CD4-positive, alpha-beta T cell (primary cell): ENCODE measurements at regions of chr6 and their contacts with region 1.

Region 1: DNA sequence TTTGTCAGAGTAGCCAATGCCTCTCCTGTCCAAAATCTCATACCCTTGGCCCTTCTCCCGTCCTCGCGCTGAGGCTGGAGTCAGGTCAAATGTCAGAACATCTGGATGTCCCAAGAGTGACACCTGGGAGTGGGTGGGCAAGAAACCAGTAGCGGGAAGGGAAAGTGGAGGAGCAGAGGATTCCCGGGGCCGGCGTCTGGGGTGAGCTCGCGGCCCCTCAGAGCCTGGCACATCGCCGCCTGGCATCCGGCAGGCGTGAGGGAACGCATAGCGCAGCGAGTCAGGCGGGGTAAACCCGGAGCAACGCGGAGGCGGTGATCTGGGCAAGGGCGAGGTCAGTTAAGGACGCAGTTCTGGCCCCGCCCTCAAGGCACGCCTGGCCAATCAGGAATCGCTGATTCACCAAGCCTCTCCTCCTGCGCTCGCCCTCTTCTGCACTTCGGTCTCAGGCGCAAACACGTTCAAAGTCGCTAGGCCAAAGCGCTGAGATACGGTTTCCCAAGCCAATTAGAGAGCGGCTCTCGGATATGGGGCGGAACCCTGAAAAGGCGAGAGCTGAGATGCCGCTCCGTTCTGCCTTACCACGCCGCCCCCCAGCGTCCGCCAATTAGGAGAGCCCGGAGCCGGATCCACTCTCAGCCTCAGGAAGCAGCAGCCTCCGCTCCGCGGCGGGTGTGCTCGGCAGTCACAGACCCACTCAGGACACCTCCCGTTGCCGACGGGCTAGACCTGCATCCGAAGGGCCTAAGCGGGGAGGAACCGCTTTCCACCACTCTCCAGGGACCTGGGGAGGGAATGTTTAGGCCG is 22.5 kb downstream of the VPS52 start:
- DNase-seq: peak; percentile 89 to 99 (median 94)
- ATAC-seq: peak; percentile 83
- H3K4me3 ChIP-seq: peak overlapping the region; percentile 70
- H3K4me3 Mint-ChIP-seq: peak overlapping the region; percentile 92
- H3K27ac ChIP-seq: peak overlapping the region; percentile 98
- H3K27ac Mint-ChIP-seq: peak overlapping the region; percentile 97
- H3K4me1 ChIP-seq: peaks cover 32% of the 10 kb centered on the region
- H3K4me1 Mint-ChIP-seq: peaks cover 37% of the 10 kb centered on the region
- H3K27me3 ChIP-seq: no peaks in the 10 kb centered on the region
- H3K27me3 Mint-ChIP-seq: no peaks in the 10 kb centered on the region
- CTCF ChIP-seq: peak; percentile 32

Region 2: GRCh38 chr6:31525932-31526591 is 1723.1 kb before region 1 on chr6:
- CTCF ChIA-PET with region 1: no interaction called
- POLR2A ChIA-PET with region 1: no interaction called
- intact Hi-C with region 1: no loop called
- DNase-seq: no peak
- ATAC-seq: no peak
- H3K4me3 ChIP-seq: no peak overlapping the region
- H3K4me3 Mint-ChIP-seq: no peak overlapping the region
- H3K27ac ChIP-seq: no peak overlapping the region
- H3K27ac Mint-ChIP-seq: no peak overlapping the region
- H3K4me1 ChIP-seq: no peaks in the 10 kb centered on the region
- H3K4me1 Mint-ChIP-seq: no peaks in the 10 kb centered on the region
- H3K27me3 ChIP-seq: no peaks in the 10 kb centered on the region
- H3K27me3 Mint-ChIP-seq: no peaks in the 10 kb centered on the region
- CTCF ChIP-seq: no peak

Region 3: GRCh38 chr6:32885698-32886286 is 363.3 kb before region 1 on chr6:
- CTCF ChIA-PET with region 1: no interaction called
- POLR2A ChIA-PET with region 1: no interaction called
- intact Hi-C with region 1: loop called in 1 of 2 experiments (anchors 1 kb)
- DNase-seq: peak in 3 of 14 experiments; percentile 83 to 85 (median 83)
- ATAC-seq: peak; percentile 65
- H3K4me3 ChIP-seq: no peak overlapping the region
- H3K4me3 Mint-ChIP-seq: no peak overlapping the region
- H3K27ac ChIP-seq: no peak overlapping the region
- H3K27ac Mint-ChIP-seq: no peak overlapping the region
- H3K4me1 ChIP-seq: no peaks in the 10 kb centered on the region
- H3K4me1 Mint-ChIP-seq: no peaks in the 10 kb centered on the region
- H3K27me3 ChIP-seq: no peaks in the 10 kb centered on the region
- H3K27me3 Mint-ChIP-seq: no peaks in the 10 kb centered on the region
- CTCF ChIP-seq: peak; percentile 73

Region 4: DNA sequence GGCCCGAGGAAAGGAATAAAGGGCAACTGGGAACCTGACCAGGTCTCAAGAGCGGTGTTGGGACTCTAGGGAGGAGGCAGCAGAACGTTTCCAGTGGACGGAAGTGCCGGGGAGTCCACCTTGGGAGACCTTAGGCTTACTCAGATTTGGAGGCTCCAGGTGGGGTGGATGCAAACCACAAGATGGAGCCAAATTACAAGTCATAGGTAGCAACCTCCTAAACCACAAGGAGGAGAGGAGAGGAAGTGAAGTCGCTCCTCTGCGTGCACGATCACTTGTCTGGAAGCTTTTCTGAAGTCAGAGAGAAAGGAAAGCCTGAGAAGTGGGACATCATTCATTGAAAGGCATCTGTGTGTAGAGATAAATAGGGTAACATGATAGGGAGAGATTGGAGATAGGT is 249.1 kb before region 1 on chr6:
- CTCF ChIA-PET with region 1: no interaction called
- POLR2A ChIA-PET with region 1: no interaction called
- intact Hi-C with region 1: no loop called
- DNase-seq: peak in 5 of 14 experiments; percentile 25 to 64 (median 35)
- ATAC-seq: peak; percentile 83
- H3K4me3 ChIP-seq: no peak overlapping the region
- H3K4me3 Mint-ChIP-seq: no peak overlapping the region
- H3K27ac ChIP-seq: no peak overlapping the region
- H3K27ac Mint-ChIP-seq: no peak overlapping the region
- H3K4me1 ChIP-seq: peaks cover 4% of the 10 kb centered on the region
- H3K4me1 Mint-ChIP-seq: peaks cover 7% of the 10 kb centered on the region
- H3K27me3 ChIP-seq: peaks cover 4 to 6% of the 10 kb centered on the region in 2 experiments
- H3K27me3 Mint-ChIP-seq: peaks cover 22% of the 10 kb centered on the region
- CTCF ChIP-seq: peak; percentile 45

Region 5: GRCh38 chr6:33161354-33162331 is 87.5 kb before region 1 on chr6:
- CTCF ChIA-PET with region 1: interaction called, 76 read pairs
- POLR2A ChIA-PET with region 1: interaction called, 27 read pairs
- intact Hi-C with region 1: loop called (anchors 1 kb)
- DNase-seq: peak; percentile 64 to 89 (median 80)
- ATAC-seq: peak; percentile 97
- H3K4me3 ChIP-seq: peak overlapping the region; percentile 46
- H3K4me3 Mint-ChIP-seq: peak overlapping the region; percentile 87
- H3K27ac ChIP-seq: no peak overlapping the region
- H3K27ac Mint-ChIP-seq: no peak overlapping the region
- H3K4me1 ChIP-seq: peaks cover 16% of the 10 kb centered on the region
- H3K4me1 Mint-ChIP-seq: peaks cover 10% of the 10 kb centered on the region
- H3K27me3 ChIP-seq: no peaks in the 10 kb centered on the region
- H3K27me3 Mint-ChIP-seq: no peaks in the 10 kb centered on the region
- CTCF ChIP-seq: peak; percentile 90

Region 6: GRCh38 chr6:33208091-33208967 is 40.8 kb before region 1 on chr6 and contains the start of gene RING1:
- CTCF ChIA-PET with region 1: interaction called, 13 read pairs
- POLR2A ChIA-PET with region 1: interaction called, 47 read pairs
- intact Hi-C with region 1: loop called (anchors 2 kb)
- DNase-seq: peak; percentile 76 to 95 (median 84)
- ATAC-seq: peak; percentile 66
- H3K4me3 ChIP-seq: peak within 1 kb of the TSS; percentile 97
- H3K4me3 Mint-ChIP-seq: peak within 1 kb of the TSS; percentile 97
- H3K27ac ChIP-seq: peak within 1 kb of the TSS; percentile 86 to 94
- H3K27ac Mint-ChIP-seq: peak within 1 kb of the TSS; percentile 95
- H3K4me1 ChIP-seq: peaks cover 55% of the 10 kb centered on the region
- H3K4me1 Mint-ChIP-seq: peaks cover 57% of the 10 kb centered on the region
- H3K27me3 ChIP-seq: peaks cover 0 to 6% of the 10 kb centered on the region in 2 experiments
- H3K27me3 Mint-ChIP-seq: peaks cover 13% of the 10 kb centered on the region
- CTCF ChIP-seq: no peak
- total RNA-seq, gene RING1: 27.1 to 28.6 TPM

Region 7: GRCh38 chr6:33288921-33289748 is 40.0 kb after region 1 on chr6 and contains the starts of genes PFDN6 and WDR46:
- CTCF ChIA-PET with region 1: interaction called, 4 read pairs
- POLR2A ChIA-PET with region 1: interaction called, 28 read pairs
- intact Hi-C with region 1: no loop called
- DNase-seq: peak; percentile 62 to 92 (median 76)
- ATAC-seq: peak; percentile 97
- H3K4me3 ChIP-seq: peak within 1 kb of the TSS; percentile 80
- H3K4me3 Mint-ChIP-seq: peak within 1 kb of the TSS; percentile 97
- H3K27ac ChIP-seq: peak within 1 kb of the TSS; percentile 71 to 83
- H3K27ac Mint-ChIP-seq: peak within 1 kb of the TSS; percentile 83
- H3K4me1 ChIP-seq: peaks cover 39% of the 10 kb centered on the region
- H3K4me1 Mint-ChIP-seq: peaks cover 45% of the 10 kb centered on the region
- H3K27me3 ChIP-seq: no peaks in the 10 kb centered on the region
- H3K27me3 Mint-ChIP-seq: no peaks in the 10 kb centered on the region
- CTCF ChIP-seq: no peak
- total RNA-seq, gene PFDN6: 9.7 to 11.7 TPM
- total RNA-seq, gene WDR46: 13.6 to 15.8 TPM

Region 8: GRCh38 chr6:33344701-33345697 is 95.9 kb after region 1 on chr6:
- CTCF ChIA-PET with region 1: interaction called, 9 read pairs
- POLR2A ChIA-PET with region 1: interaction called, 21 read pairs
- intact Hi-C with region 1: no loop called
- DNase-seq: peak; percentile 53 to 93 (median 62)
- ATAC-seq: peak; percentile 52
- H3K4me3 ChIP-seq: peak overlapping the region; percentile 24
- H3K4me3 Mint-ChIP-seq: peak overlapping the region; percentile 90
- H3K27ac ChIP-seq: peak overlapping the region; percentile 79 to 88
- H3K27ac Mint-ChIP-seq: peak overlapping the region; percentile 98
- H3K4me1 ChIP-seq: peaks cover 49% of the 10 kb centered on the region
- H3K4me1 Mint-ChIP-seq: peaks cover 38% of the 10 kb centered on the region
- H3K27me3 ChIP-seq: no peaks in the 10 kb centered on the region
- H3K27me3 Mint-ChIP-seq: no peaks in the 10 kb centered on the region
- CTCF ChIP-seq: peak; percentile 64